Heart left ventricle (tissue), 16 donors: ENCODE measurements at regions of chr20 and their contacts with region 1.

Region 1: GRCh38 chr20:18287915-18288748 is at the start of gene ZNF133:
- DNase-seq: peak; percentile 96 to 97 (median 97)
- ATAC-seq: peak; percentile 99
- H3K4me3 ChIP-seq: peak within 1 kb of the TSS; percentile 62 to 99 (median 78)
- H3K27ac ChIP-seq: peak within 1 kb of the TSS; percentile 80 to 100 (median 95)
- H3K4me1 ChIP-seq: peaks cover 0 to 21% (median 12%) of the 10 kb centered on the region in 12 donors
- H3K27me3 ChIP-seq: peaks cover 0 to 9% (median 0%) of the 10 kb centered on the region in 9 donors
- CTCF ChIP-seq: peak in 3 of 12 donors; percentile 15 to 24 (median 23)
- POLR2A ChIP-seq: peak in 1 of 2 donors; percentile 75
- total RNA-seq, gene ZNF133: 4.0 to 9.8 (median 6.3) TPM

Region 2: GRCh38 chr20:17968366-17969279 is 319.5 kb before region 1 on chr20 and contains the starts of genes MGME1 and SNX5:
- intact Hi-C with region 1: loop called in 2 of 10 experiments (anchors 5 to 10 kb)
- DNase-seq: peak; percentile 99 to 100 (median 100)
- ATAC-seq: peak; percentile 97 to 99 (median 98)
- H3K4me3 ChIP-seq: peak within 1 kb of the TSS; percentile 54 to 97 (median 91)
- H3K27ac ChIP-seq: peak within 1 kb of the TSS; percentile 85 to 100 (median 96)
- H3K4me1 ChIP-seq: peaks cover 2 to 80% (median 67%) of the 10 kb centered on the region in 12 donors
- H3K27me3 ChIP-seq: no peaks in the 10 kb centered on the region
- CTCF ChIP-seq: peak in 3 of 12 donors; percentile 5 to 16 (median 6)
- POLR2A ChIP-seq: peak in 1 of 2 donors; percentile 54
- total RNA-seq, gene MGME1: 8.6 to 22.0 (median 11.8) TPM
- total RNA-seq, gene SNX5: 36.6 to 75.0 (median 45.9) TPM

Region 3: GRCh38 chr20:18137412-18138265 is 150.5 kb before region 1 on chr20 and contains the starts of genes KAT14 and PET117:
- intact Hi-C with region 1: loop called in 7 of 10 experiments (anchors 5 to 10 kb)
- DNase-seq: peak; percentile 92 to 96 (median 93)
- ATAC-seq: peak; percentile 93 to 99 (median 98)
- H3K4me3 ChIP-seq: peak within 1 kb of the TSS; percentile 55 to 100 (median 92)
- H3K27ac ChIP-seq: peak within 1 kb of the TSS; percentile 69 to 97 (median 90)
- H3K4me1 ChIP-seq: peaks cover 0 to 24% (median 17%) of the 10 kb centered on the region in 12 donors
- H3K27me3 ChIP-seq: no peaks in the 10 kb centered on the region
- CTCF ChIP-seq: peak in 1 of 12 donors; percentile 5
- POLR2A ChIP-seq: peak in 1 of 2 donors; percentile 70
- total RNA-seq, gene KAT14: 8.3 to 12.3 (median 10.9) TPM
- total RNA-seq, gene PET117: 8.1 to 15.0 (median 11.9) TPM

Region 4: GRCh38 chr20:18507218-18508021 is 219.3 kb after region 1 on chr20 and contains the start of gene SEC23B:
- intact Hi-C with region 1: loop called in 1 of 10 experiments (anchors 10 kb)
- DNase-seq: peak; percentile 97 to 99 (median 97)
- ATAC-seq: peak; percentile 99
- H3K4me3 ChIP-seq: peak within 1 kb of the TSS; percentile 68 to 96 (median 77)
- H3K27ac ChIP-seq: peak within 1 kb of the TSS; percentile 91 to 99 (median 95)
- H3K4me1 ChIP-seq: peaks cover 0 to 44% (median 10%) of the 10 kb centered on the region in 12 donors
- H3K27me3 ChIP-seq: peaks cover 0 to 23% (median 0%) of the 10 kb centered on the region in 9 donors
- CTCF ChIP-seq: no peak
- POLR2A ChIP-seq: peak; percentile 11 to 68
- total RNA-seq, gene SEC23B: 8.5 to 29.2 (median 11.9) TPM

Region 5: DNA sequence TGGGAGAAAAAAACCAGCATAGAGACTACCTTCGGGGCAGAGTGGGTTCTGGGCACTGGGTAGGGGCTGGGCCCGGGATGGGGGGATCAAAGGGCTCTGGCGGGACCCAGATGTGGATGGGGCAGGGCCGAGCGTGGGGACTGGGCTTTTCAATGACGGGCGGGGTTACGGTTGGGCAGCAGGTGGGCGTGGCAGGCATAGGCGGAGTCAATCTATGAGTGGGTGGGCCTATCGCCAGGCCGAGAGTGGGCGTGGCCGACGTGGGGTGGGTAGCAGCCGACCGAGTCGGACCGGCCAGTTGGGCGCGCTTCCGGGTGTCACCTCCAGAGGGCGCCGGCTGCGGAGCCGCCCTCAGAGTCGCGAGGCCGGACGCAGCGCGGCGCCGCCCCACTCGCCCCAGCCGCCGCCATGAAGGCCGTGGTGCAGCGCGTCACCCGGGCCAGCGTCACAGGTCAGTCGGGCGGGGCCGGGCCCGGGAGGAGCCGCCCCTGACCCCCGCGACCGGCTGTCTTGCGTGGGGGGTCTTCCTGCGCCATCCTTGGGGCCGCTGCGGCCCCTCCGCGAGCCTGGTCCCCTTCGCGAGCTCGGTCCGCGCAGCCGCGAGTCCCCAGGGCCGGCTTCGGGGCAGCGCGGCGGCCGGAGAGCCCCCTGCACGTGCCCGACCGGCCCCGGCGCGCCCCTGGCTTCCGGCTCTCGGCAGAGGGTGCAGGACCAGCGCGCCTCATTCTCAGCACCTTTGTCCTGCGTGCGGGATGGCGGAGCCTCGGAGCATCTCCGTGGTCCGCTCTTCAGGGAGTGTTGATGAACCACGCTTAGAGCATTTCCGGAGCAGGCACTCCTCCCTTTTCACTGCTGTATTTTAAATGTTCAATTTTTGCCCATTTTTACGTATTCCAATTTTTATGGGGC is 299.8 kb after region 1 on chr20 and contains the start of gene DTD1:
- intact Hi-C with region 1: loop called in 1 of 10 experiments (anchors 10 kb)
- DNase-seq: peak; percentile 93 to 98 (median 96)
- ATAC-seq: peak; percentile 87 to 99 (median 98)
- H3K4me3 ChIP-seq: peak within 1 kb of the TSS; percentile 71 to 98 (median 88)
- H3K27ac ChIP-seq: peak within 1 kb of the TSS in 11 of 12 donors; percentile 65 to 90 (median 80)
- H3K4me1 ChIP-seq: peaks cover 0 to 16% (median 6%) of the 10 kb centered on the region in 12 donors
- H3K27me3 ChIP-seq: no peaks in the 10 kb centered on the region
- CTCF ChIP-seq: peak; percentile 54 to 88 (median 72)
- POLR2A ChIP-seq: peak in 1 of 2 donors; percentile 62
- total RNA-seq, gene DTD1: 12.1 to 20.8 (median 15.6) TPM